Activated naive CD4-positive, alpha-beta T cell treated with anti-CD3 and anti-CD28 coated beads for 36 hours (primary cell): ENCODE measurements at regions of chr2 and their contacts with region 1.

Region 1: GRCh38 chr2:160493227-160494028 is at the start of gene RBMS1:
- DNase-seq: peak; percentile 58
- H3K4me3 Mint-ChIP-seq: peak within 1 kb of the TSS; percentile 93
- H3K27ac Mint-ChIP-seq: peak within 1 kb of the TSS; percentile 93
- H3K4me1 Mint-ChIP-seq: peaks cover 43% of the 10 kb centered on the region
- H3K27me3 Mint-ChIP-seq: no peaks in the 10 kb centered on the region
- total RNA-seq, gene RBMS1: 27.8 to 29.1 TPM

Region 2: GRCh38 chr2:160332318-160332717 is 161.1 kb before region 1 on chr2:
- CTCF ChIA-PET with region 1: no interaction called
- intact Hi-C with region 1: loop called (anchors 2 kb)
- DNase-seq: peak; percentile 50
- H3K4me3 Mint-ChIP-seq: no peak overlapping the region
- H3K27ac Mint-ChIP-seq: peak overlapping the region; percentile 38
- H3K4me1 Mint-ChIP-seq: peaks cover 81% of the 10 kb centered on the region
- H3K27me3 Mint-ChIP-seq: no peaks in the 10 kb centered on the region

Region 3: DNA sequence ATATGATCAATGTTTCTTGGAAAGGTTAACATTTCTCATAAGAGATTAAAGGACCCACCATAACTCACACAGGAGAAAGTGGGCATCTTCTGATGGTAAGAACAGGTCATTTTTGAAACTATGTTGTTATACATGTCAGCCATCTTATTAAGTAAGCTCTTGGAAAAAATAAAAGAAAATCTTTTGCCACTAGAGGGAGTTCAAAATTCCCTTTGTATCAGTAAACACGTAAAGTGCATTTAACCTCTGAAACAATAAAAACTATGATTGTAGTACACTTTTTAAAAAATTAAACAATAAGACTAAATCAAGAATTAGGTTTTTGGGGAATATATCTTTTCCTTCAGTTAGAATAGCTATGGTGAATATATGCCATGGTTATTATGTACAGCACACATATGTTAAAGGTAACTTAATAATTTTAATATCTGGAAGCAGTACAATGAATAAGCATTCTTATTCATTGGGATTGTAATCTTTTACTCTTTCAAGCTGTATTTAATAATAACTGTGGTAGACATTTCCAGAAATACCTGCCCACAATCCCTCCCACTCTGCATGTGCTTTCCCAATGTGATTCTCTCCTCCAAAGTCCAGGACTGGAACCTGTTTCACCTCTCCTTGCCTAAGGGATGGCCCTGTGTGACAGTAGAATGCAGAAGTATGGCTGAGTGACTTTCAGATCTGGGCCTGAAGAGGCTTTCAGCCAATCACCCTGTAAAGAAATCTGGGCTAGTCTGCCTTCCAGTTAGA is 64.0 kb before region 1 on chr2:
- CTCF ChIA-PET with region 1: interaction called, 7 read pairs
- intact Hi-C with region 1: loop called (anchors 1 kb)
- DNase-seq: no peak
- H3K4me3 Mint-ChIP-seq: peak overlapping the region; percentile 47
- H3K27ac Mint-ChIP-seq: peak overlapping the region; percentile 88
- H3K4me1 Mint-ChIP-seq: peaks cover 49% of the 10 kb centered on the region
- H3K27me3 Mint-ChIP-seq: no peaks in the 10 kb centered on the region

Region 4: GRCh38 chr2:160472839-160473251 is 20.6 kb before region 1 on chr2:
- CTCF ChIA-PET with region 1: interaction called, 4 read pairs
- intact Hi-C with region 1: loop called (anchors 1 kb)
- DNase-seq: no peak
- H3K4me3 Mint-ChIP-seq: no peak overlapping the region
- H3K27ac Mint-ChIP-seq: no peak overlapping the region
- H3K4me1 Mint-ChIP-seq: peaks cover 69% of the 10 kb centered on the region
- H3K27me3 Mint-ChIP-seq: no peaks in the 10 kb centered on the region

Region 5: DNA sequence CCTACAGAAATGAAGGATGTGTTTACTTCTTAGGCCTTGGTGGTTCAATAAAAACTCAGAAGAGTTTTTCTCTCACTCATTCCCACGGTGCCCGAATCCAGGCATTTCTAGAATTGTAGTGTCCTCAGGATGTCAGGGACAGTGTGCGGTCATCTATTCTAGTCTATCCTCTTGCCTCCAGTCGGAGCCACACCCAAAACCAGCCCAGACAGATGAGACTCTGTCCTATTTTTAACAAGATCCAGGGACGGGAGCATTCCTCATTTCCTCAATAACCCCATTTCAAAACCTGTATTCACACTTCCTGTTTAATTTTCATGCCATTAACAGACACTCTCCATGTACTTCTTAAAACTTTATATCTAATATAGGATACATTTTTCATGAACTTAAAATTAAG is 11.8 kb after region 1 on chr2:
- CTCF ChIA-PET with region 1: no interaction called
- intact Hi-C with region 1: loop called (anchors 1 kb)
- DNase-seq: no peak
- H3K4me3 Mint-ChIP-seq: no peak overlapping the region
- H3K27ac Mint-ChIP-seq: no peak overlapping the region
- H3K4me1 Mint-ChIP-seq: peaks cover 17% of the 10 kb centered on the region
- H3K27me3 Mint-ChIP-seq: no peaks in the 10 kb centered on the region

Region 6: GRCh38 chr2:160538559-160539355 is 45.3 kb after region 1 on chr2:
- CTCF ChIA-PET with region 1: no interaction called
- intact Hi-C with region 1: no loop called
- DNase-seq: no peak
- H3K4me3 Mint-ChIP-seq: no peak overlapping the region
- H3K27ac Mint-ChIP-seq: no peak overlapping the region
- H3K4me1 Mint-ChIP-seq: no peaks in the 10 kb centered on the region
- H3K27me3 Mint-ChIP-seq: no peaks in the 10 kb centered on the region

Region 7: DNA sequence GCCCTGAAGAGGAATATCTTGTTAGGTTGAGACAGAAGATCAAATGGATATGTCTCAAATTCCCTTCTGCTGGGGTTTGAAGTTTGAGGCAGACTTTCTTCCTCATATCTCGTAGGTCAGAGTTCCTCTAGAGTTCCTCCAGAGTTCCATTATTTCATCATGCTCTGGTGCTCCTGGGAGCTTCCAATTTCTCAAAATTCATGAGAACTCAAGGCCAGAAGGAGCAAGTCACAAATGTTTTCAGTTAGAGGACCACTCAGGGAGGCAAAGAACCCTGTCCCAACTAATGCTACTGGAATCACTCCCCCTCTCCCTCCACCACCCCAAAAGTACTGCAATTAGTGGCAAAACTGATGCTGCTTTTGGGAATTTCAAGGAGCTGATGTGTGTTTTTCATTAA is 115.9 kb after region 1 on chr2:
- CTCF ChIA-PET with region 1: no interaction called
- intact Hi-C with region 1: no loop called
- DNase-seq: no peak
- H3K4me3 Mint-ChIP-seq: no peak overlapping the region
- H3K27ac Mint-ChIP-seq: no peak overlapping the region
- H3K4me1 Mint-ChIP-seq: peaks cover 41% of the 10 kb centered on the region
- H3K27me3 Mint-ChIP-seq: no peaks in the 10 kb centered on the region

Region 8: GRCh38 chr2:161160226-161161069 is 667.0 kb after region 1 on chr2 and contains the start of gene TANK:
- CTCF ChIA-PET with region 1: no interaction called
- intact Hi-C with region 1: loop called (anchors 2 kb)
- DNase-seq: peak; percentile 94
- H3K4me3 Mint-ChIP-seq: peak within 1 kb of the TSS; percentile 96
- H3K27ac Mint-ChIP-seq: peak within 1 kb of the TSS; percentile 99
- H3K4me1 Mint-ChIP-seq: peaks cover 48% of the 10 kb centered on the region
- H3K27me3 Mint-ChIP-seq: no peaks in the 10 kb centered on the region
- total RNA-seq, gene TANK: 48.6 to 50.4 TPM